Mammary epithelial cell (primary cell): ENCODE measurements at regions of chr19 and their contacts with region 1.

Region 1: DNA sequence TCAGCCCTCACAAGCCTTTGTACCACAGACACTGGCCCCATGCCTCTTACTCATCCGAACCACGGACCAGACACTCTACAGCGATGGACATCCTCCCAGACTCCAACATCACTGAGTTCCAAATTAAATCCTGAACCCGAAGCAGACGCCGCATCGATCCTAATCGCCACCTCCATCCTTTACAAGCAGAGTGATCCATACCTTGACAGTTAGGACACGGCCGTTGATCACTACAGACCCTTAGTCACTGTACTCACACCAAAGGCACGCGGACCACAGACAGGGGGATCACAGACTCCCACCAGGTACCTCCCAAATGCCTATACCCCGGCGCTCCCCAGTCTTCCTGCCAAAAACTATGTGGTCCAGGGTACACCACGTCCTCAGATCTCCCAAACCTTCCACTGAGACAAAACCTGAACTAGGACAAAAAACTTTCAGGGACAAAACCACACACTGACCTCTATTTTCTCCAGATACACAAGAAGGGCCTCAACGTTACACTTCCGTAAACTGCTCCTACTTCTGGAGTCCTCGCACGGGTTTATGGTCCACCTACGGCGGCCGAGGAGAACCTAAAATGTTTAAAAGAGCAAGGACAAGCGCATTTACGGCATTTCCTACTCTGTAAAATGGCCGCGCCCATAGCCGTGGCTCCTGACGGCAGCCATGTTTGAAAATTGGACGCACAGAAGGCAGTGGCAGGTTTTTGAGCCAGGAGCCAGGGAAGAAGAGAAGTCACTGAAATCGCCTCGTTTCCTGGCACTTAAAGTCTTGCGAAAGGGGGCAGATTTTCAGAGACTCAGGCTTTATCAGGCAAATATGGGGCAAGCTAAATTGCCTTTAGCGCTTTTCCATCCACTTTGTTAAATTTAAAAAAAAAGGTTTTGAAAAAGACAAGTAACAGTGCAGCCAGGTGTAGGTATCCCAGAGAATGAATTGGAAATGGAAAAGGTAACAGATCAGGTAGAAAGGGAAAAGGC is at the start of gene ZNF350:
- DNase-seq: peak; percentile 93
- H3K4me3 ChIP-seq: peak within 1 kb of the TSS; percentile 69 to 84 (median 84)
- H3K27ac ChIP-seq: peak within 1 kb of the TSS; percentile 64
- H3K4me1 ChIP-seq: peaks cover 3% of the 10 kb centered on the region
- H3K27me3 ChIP-seq: no peaks in the 10 kb centered on the region
- CTCF ChIP-seq: no peak
- total RNA-seq, gene ZNF350: 7.7 to 8.8 TPM

Region 2: DNA sequence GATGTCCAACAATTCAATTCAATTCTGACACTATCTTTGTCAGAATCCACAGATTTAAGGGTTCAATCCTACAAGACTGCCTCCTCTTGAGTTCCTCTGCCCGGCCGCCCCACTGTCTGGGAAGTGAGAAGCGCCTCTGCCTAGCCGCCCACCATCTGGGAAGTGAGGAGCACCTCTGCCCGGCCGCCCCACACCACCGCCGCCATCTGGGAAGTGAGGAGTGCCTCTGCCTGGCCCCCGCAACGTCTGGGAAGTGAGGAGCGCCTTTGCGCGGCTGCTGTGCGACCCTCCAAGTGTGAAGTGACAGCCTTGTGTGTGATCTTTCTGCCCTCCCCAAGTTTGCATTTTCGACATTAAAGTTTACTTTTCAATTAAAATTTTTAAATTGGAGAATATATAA is 35.6 kb after region 1 on chr19:
- CTCF ChIA-PET with region 1: no interaction called
- dilution Hi-C with region 1: loop called (anchors 5 kb)
- in situ Hi-C with region 1: no loop called
- intact Hi-C with region 1: no loop called
- DNase-seq: no peak
- H3K4me3 ChIP-seq: no peak overlapping the region
- H3K27ac ChIP-seq: no peak overlapping the region
- H3K4me1 ChIP-seq: no peaks in the 10 kb centered on the region
- H3K27me3 ChIP-seq: no peaks in the 10 kb centered on the region
- CTCF ChIP-seq: no peak